Activated naive CD4-positive, alpha-beta T cell treated with anti-CD3 and anti-CD28 coated beads, Interleukin-2, amount 10 ng/mL, durations not matched to agents 7 days and 5 days (primary cell): ENCODE measurements at regions of chr18 and their contacts with region 1.

Region 1: GRCh38 chr18:5237723-5238370 is 40.8 kb upstream of the AKAIN1 start:
- DNase-seq: peak; percentile 88
- H3K4me3 Mint-ChIP-seq: peak overlapping the region; percentile 90
- H3K27ac Mint-ChIP-seq: peak overlapping the region; percentile 96
- H3K4me1 Mint-ChIP-seq: peaks cover 43% of the 10 kb centered on the region
- H3K27me3 Mint-ChIP-seq: no peaks in the 10 kb centered on the region

Region 2: DNA sequence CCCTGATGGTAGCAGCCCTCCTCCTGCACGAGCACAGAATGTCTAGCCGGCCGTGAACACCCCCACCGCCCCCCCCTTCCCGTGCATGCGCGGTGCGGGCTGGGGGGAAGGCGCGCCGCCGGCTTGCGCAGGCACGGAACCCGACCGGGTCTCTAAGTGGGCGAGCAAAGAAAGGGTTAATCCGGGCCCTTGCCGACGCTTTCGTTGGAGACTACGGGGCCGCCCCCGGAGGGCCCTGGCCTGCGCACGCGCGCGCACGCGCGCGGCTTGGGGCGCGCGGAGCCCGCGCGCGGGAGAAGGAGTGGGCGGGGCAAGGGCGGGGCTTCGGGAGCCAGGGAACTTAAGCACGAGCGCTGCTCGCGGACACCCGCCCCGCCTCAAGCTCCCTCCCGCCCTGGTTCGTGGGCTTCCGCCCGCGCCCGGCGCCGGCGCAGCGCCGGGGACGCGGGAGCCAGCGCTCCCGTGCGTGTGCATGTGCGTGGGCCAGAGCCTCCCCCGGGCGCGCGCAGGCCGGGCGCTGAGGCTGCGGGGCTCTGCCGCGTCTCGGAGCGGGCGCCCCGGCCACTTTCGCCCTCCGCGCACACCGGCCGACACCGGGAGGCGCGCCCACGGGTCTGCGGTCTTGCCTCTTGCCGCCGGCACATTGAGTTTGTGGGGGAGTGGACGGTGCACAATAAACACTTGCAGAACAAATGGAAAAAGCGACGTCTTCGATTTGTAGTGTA is 58.3 kb after region 1 on chr18:
- CTCF ChIA-PET with region 1: interaction called, 10 read pairs
- DNase-seq: peak; percentile 94
- H3K4me3 Mint-ChIP-seq: peak overlapping the region; percentile 82
- H3K27ac Mint-ChIP-seq: peak overlapping the region; percentile 99
- H3K4me1 Mint-ChIP-seq: peaks cover 34% of the 10 kb centered on the region
- H3K27me3 Mint-ChIP-seq: peaks cover 17% of the 10 kb centered on the region